HepG2 (cell line): ENCODE measurements at regions of chr7 and their contacts with region 1.

Region 1: DNA sequence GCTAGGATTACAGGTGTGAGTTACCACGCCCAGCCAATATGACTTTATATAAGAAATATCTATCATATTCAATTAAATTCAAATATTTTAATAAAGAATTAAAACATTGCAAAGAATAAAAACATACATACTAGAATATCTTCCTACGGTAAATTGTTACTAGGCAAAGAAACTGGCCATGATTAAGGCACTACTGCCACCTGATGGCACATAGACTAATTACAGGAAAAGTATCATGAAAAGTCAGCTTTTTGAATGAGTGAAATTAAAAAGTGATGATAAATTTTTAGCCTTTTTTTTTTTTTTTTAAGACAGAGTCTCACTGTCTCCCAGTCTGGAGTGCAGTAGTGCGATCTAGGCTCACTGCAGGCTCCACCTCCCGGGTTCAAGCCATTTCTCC is 30.9 kb downstream of the MRPS33 start:
- DNase-seq: no peak
- ATAC-seq: no peak
- H3K4me3 ChIP-seq: no peak overlapping the region
- H3K27ac ChIP-seq: no peak overlapping the region
- H3K4me1 ChIP-seq: peaks cover 20% of the 10 kb centered on the region
- H3K27me3 ChIP-seq: no peaks in the 10 kb centered on the region
- CTCF ChIP-seq: peak; percentile 66
- EP300 ChIP-seq: no peak
- POLR2A ChIP-seq: no peak
- RAD21 ChIP-seq: peak; percentile 40; the same call in 1 of the 2 replicates

Region 2: GRCh38 chr7:140810830-140811556 is 172.8 kb before region 1 on chr7:
- CTCF ChIA-PET with region 1: interaction called, 24 read pairs
- POLR2A ChIA-PET with region 1: interaction called, 17 read pairs
- in situ Hi-C with region 1: no loop called
- intact Hi-C with region 1: loop called (anchors 1 kb)
- DNase-seq: peak; percentile 76
- ATAC-seq: peak; percentile 99
- H3K4me3 ChIP-seq: no peak overlapping the region
- H3K27ac ChIP-seq: no peak overlapping the region
- H3K4me1 ChIP-seq: peaks cover 12% of the 10 kb centered on the region
- H3K27me3 ChIP-seq: no peaks in the 10 kb centered on the region
- CTCF ChIP-seq: peak; percentile 91
- EP300 ChIP-seq: no peak
- POLR2A ChIP-seq: no peak
- RAD21 ChIP-seq: peak; percentile 78